ENCODE measurements at regions of chr11 and their contacts with region 1.

Region 1: GRCh38 chr11:73262851-73263495 is 9.2 kb upstream of the P2RY6 start:
- DNase-seq: peak in 1 of 2 donors; percentile 20
- H3K4me3 ChIP-seq: no peak overlapping the region
- CTCF ChIP-seq: no peak
- POLR2A ChIP-seq: no peak

Region 2: GRCh38 chr11:72930008-72930407 is 333.0 kb before region 1 on chr11:
- intact Hi-C with region 1: loop called (anchors 5 kb)
- DNase-seq: no peak
- H3K4me3 ChIP-seq: no peak overlapping the region
- CTCF ChIP-seq: no peak
- POLR2A ChIP-seq: no peak